Heart left ventricle (tissue), 16 donors: ENCODE measurements at regions of chr4 and their contacts with region 1.

Region 1: GRCh38 chr4:83034630-83035494 is at the start of gene COPS4:
- DNase-seq: peak; percentile 96 to 98 (median 98)
- ATAC-seq: peak; percentile 100
- H3K4me3 ChIP-seq: peak within 1 kb of the TSS; percentile 63 to 92 (median 74)
- H3K27ac ChIP-seq: peak within 1 kb of the TSS; percentile 71 to 94 (median 89)
- H3K4me1 ChIP-seq: peaks cover 0 to 32% (median 18%) of the 10 kb centered on the region in 12 donors
- H3K27me3 ChIP-seq: no peaks in the 10 kb centered on the region
- CTCF ChIP-seq: peak in 11 of 12 donors; percentile 14 to 71 (median 54)
- POLR2A ChIP-seq: peak; percentile 21 to 61
- total RNA-seq, gene COPS4: 47.6 to 67.2 (median 54.5) TPM

Region 2: GRCh38 chr4:82284858-82285805 is 749.7 kb before region 1 on chr4:
- intact Hi-C with region 1: loop called in 1 of 10 experiments (anchors 10 kb)
- DNase-seq: peak; percentile 99 to 100 (median 99)
- ATAC-seq: peak; percentile 100
- H3K4me3 ChIP-seq: peak overlapping the region; percentile 12 to 61 (median 55)
- H3K27ac ChIP-seq: peak overlapping the region in 10 of 12 donors; percentile 16 to 75 (median 50)
- H3K4me1 ChIP-seq: peaks cover 0 to 9% (median 5%) of the 10 kb centered on the region in 12 donors
- H3K27me3 ChIP-seq: no peaks in the 10 kb centered on the region
- CTCF ChIP-seq: peak; percentile 85 to 99 (median 95)
- POLR2A ChIP-seq: peak in 1 of 2 donors; percentile 36

Region 3: GRCh38 chr4:82428969-82429727 is 605.7 kb before region 1 on chr4:
- intact Hi-C with region 1: loop called in 3 of 10 experiments (anchors 5 to 10 kb)
- DNase-seq: peak; percentile 93 to 97 (median 93)
- ATAC-seq: peak; percentile 76 to 86 (median 85)
- H3K4me3 ChIP-seq: peak overlapping the region; percentile 63 to 99 (median 90)
- H3K27ac ChIP-seq: peak overlapping the region; percentile 91 to 100 (median 98)
- H3K4me1 ChIP-seq: peaks cover 0 to 60% (median 31%) of the 10 kb centered on the region in 12 donors
- H3K27me3 ChIP-seq: no peaks in the 10 kb centered on the region
- CTCF ChIP-seq: peak; percentile 90 to 100 (median 98)
- POLR2A ChIP-seq: peak in 1 of 2 donors; percentile 69

Region 4: GRCh38 chr4:82900331-82901128 is 134.3 kb before region 1 on chr4 and contains the start of gene THAP9:
- intact Hi-C with region 1: loop called in 5 of 10 experiments (anchors 2 to 10 kb)
- DNase-seq: peak; percentile 98 to 99 (median 99)
- ATAC-seq: peak; percentile 97 to 99 (median 99)
- H3K4me3 ChIP-seq: peak within 1 kb of the TSS; percentile 42 to 85 (median 74)
- H3K27ac ChIP-seq: peak within 1 kb of the TSS; percentile 96 to 100 (median 99)
- H3K4me1 ChIP-seq: peaks cover 0 to 46% (median 33%) of the 10 kb centered on the region in 12 donors
- H3K27me3 ChIP-seq: no peaks in the 10 kb centered on the region
- CTCF ChIP-seq: no peak
- POLR2A ChIP-seq: peak in 1 of 2 donors; percentile 65
- total RNA-seq, gene THAP9: 3.1 to 7.7 (median 5.4) TPM

Region 5: GRCh38 chr4:83019794-83020494 is 14.9 kb before region 1 on chr4:
- intact Hi-C with region 1: loop called in 1 of 10 experiments (anchors 2 kb)
- DNase-seq: no peak
- ATAC-seq: no peak
- H3K4me3 ChIP-seq: no peak overlapping the region
- H3K27ac ChIP-seq: no peak overlapping the region
- H3K4me1 ChIP-seq: peaks cover 0 to 7% (median 0%) of the 10 kb centered on the region in 12 donors
- H3K27me3 ChIP-seq: no peaks in the 10 kb centered on the region
- CTCF ChIP-seq: no peak
- POLR2A ChIP-seq: no peak

Region 6: GRCh38 chr4:83097018-83097417 is 62.2 kb after region 1 on chr4:
- intact Hi-C with region 1: no loop called
- DNase-seq: no peak
- ATAC-seq: no peak
- H3K4me3 ChIP-seq: no peak overlapping the region
- H3K27ac ChIP-seq: no peak overlapping the region
- H3K4me1 ChIP-seq: no peaks in the 10 kb centered on the region
- H3K27me3 ChIP-seq: peaks cover 0 to 11% (median 0%) of the 10 kb centered on the region in 9 donors
- CTCF ChIP-seq: no peak
- POLR2A ChIP-seq: no peak